Mammary epithelial cell (primary cell): ENCODE measurements at regions of chr19 and their contacts with region 1.

Region 1: GRCh38 chr19:7554990-7555864 is 19.7 kb downstream of the PNPLA6 start:
- DNase-seq: no peak
- H3K4me3 ChIP-seq: no peak overlapping the region
- H3K27ac ChIP-seq: no peak overlapping the region
- H3K4me1 ChIP-seq: no peaks in the 10 kb centered on the region
- H3K27me3 ChIP-seq: no peaks in the 10 kb centered on the region
- CTCF ChIP-seq: no peak

Region 2: GRCh38 chr19:7442423-7442822 is 112.8 kb before region 1 on chr19:
- CTCF ChIA-PET with region 1: no interaction called
- dilution Hi-C with region 1: loop called (anchors 5 kb)
- in situ Hi-C with region 1: no loop called
- intact Hi-C with region 1: no loop called
- DNase-seq: no peak
- H3K4me3 ChIP-seq: no peak overlapping the region
- H3K27ac ChIP-seq: no peak overlapping the region
- H3K4me1 ChIP-seq: no peaks in the 10 kb centered on the region
- H3K27me3 ChIP-seq: no peaks in the 10 kb centered on the region
- CTCF ChIP-seq: no peak

Region 3: GRCh38 chr19:7509619-7510018 is 45.6 kb before region 1 on chr19:
- CTCF ChIA-PET with region 1: no interaction called
- dilution Hi-C with region 1: loop called (anchors 5 kb)
- in situ Hi-C with region 1: no loop called
- intact Hi-C with region 1: no loop called
- DNase-seq: no peak
- H3K4me3 ChIP-seq: no peak overlapping the region
- H3K27ac ChIP-seq: no peak overlapping the region
- H3K4me1 ChIP-seq: peaks cover 3% of the 10 kb centered on the region
- H3K27me3 ChIP-seq: no peaks in the 10 kb centered on the region
- CTCF ChIP-seq: no peak